ENCODE measurements at regions of chr3 and their contacts with region 1.

Region 1: DNA sequence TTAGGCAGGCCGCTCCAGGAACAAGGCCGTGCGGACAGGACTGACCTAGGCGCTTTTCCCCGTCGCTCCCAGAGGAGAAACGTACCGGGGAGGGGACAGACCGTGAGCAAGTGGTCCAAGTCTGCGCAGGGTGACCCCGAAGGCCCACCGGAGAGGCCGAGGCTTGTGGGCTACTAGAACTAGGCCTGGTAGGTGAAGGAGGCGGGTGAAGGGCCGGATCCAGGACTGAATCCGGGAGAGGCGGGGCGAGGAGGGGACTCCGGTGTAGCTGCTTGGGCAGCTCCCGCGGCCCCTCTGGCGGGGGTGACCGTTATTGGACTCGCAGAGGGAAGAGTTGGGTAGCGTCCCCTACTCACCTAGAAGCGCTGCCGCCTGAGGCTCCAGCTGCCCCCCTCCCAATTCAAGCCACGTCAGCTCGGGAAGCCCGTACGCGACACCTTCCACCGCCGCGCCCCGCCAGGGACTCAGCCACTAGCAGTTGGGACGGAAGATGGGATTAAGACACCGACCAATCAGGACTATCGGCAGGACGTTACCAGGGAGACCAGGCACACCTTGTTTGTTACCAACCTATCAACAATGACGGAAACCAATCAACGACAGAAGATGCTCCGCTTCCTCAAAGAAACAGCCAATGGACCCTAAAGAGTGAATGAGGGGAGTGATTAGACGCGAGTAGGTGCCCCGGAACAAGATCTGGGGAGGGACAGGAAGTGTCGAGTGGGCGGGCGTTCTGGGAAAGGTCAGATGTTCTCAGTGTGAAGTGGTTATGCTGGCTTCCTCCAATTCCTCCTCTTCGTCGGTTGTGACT is at the start of gene GOLGB1:
- DNase-seq: peak; percentile 86 to 99 (median 95)

Region 2: DNA sequence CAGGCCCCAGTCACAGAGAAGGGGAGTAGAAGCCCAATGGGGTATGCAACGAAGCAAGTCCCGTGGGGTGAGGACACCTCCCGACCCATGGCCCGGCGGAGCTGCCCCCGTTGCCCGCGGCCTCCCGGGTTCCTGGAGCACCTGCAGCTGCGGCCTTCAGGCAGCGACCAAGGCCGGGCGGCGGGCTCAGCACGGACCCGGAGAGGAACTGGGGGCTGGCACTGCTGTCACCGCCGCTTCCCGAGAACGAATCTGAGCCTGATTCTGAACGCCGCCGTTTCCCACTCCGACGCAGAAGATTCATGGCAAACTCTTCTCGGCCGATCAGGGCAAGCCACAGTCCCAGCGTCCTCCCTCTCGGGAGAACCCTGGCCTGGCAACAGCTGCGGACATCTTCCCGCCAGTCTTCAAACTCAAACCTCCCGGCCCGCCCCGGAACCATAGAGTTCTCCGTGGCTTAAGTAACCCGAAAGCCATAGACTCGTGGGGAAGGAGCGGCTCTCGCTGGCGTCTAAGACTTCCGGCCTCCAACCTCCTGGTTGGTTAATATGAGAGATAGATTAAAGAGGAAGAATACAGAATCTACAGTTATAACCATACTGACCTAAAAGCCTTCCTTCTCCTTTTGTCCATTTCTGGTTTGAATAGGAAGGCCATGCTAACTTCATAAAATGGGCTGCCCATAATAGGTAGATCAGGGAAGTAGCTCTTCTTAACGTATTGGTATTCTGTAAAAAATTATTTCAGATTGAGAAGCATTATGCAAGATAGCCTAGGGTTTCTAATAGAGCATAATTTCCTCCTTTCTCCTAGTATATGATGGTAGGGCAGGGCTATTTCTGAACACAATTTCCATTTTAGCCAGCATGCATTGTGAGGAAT is 203.7 kb before region 1 on chr3 and contains the start of gene POLQ:
- intact Hi-C with region 1: loop called (anchors 5 kb)
- DNase-seq: peak; percentile 89 to 99 (median 94)

Region 3: GRCh38 chr3:121698901-121699300 is 50.6 kb before region 1 on chr3:
- intact Hi-C with region 1: no loop called
- DNase-seq: no peak

Region 4: GRCh38 chr3:121834696-121835464 is 85.4 kb after region 1 on chr3 and contains the starts of genes EAF2 and IQCB1:
- intact Hi-C with region 1: loop called (anchors 10 kb)
- DNase-seq: peak; percentile 91 to 100 (median 97)